Mammary epithelial cell (primary cell): ENCODE measurements at regions of chr17 and their contacts with region 1.

Region 1: DNA sequence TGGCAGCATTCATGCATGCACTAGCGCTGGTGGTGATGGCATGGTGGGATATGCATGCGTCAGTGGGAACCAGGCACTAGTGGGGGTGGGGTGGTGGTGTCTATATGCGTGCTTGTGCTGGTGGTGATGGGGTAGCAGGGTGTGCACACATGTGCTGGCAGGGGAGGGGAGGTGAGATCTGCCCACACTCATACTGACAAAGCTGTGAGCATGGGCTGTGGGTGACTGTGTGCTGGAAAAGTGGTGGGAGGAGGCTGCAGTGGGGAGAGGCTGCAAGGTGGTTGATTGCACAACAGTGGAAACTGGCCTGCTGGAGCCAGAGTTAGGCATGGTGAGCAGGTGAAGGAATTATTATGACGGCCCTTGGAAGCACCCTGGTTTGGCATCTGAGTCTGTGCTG is 31.3 kb upstream of the TEKT1 start:
- DNase-seq: peak; percentile 56
- H3K4me3 ChIP-seq: no peak overlapping the region
- H3K27ac ChIP-seq: no peak overlapping the region
- H3K4me1 ChIP-seq: peaks cover 12% of the 10 kb centered on the region
- H3K27me3 ChIP-seq: no peaks in the 10 kb centered on the region
- CTCF ChIP-seq: no peak

Region 2: GRCh38 chr17:6768447-6768846 is 94.4 kb before region 1 on chr17:
- CTCF ChIA-PET with region 1: no interaction called
- dilution Hi-C with region 1: loop called (anchors 5 kb)
- in situ Hi-C with region 1: no loop called
- intact Hi-C with region 1: no loop called
- DNase-seq: no peak
- H3K4me3 ChIP-seq: no peak overlapping the region
- H3K27ac ChIP-seq: no peak overlapping the region
- H3K4me1 ChIP-seq: no peaks in the 10 kb centered on the region
- H3K27me3 ChIP-seq: no peaks in the 10 kb centered on the region
- CTCF ChIP-seq: no peak

Region 3: GRCh38 chr17:6959700-6960099 is 96.9 kb after region 1 on chr17:
- CTCF ChIA-PET with region 1: no interaction called
- dilution Hi-C with region 1: no loop called
- in situ Hi-C with region 1: no loop called
- intact Hi-C with region 1: no loop called
- DNase-seq: no peak
- H3K4me3 ChIP-seq: no peak overlapping the region
- H3K27ac ChIP-seq: no peak overlapping the region
- H3K4me1 ChIP-seq: no peaks in the 10 kb centered on the region
- H3K27me3 ChIP-seq: no peaks in the 10 kb centered on the region
- CTCF ChIP-seq: no peak